ENCODE measurements at regions of chr1 and their contacts with region 1.

Region 1: DNA sequence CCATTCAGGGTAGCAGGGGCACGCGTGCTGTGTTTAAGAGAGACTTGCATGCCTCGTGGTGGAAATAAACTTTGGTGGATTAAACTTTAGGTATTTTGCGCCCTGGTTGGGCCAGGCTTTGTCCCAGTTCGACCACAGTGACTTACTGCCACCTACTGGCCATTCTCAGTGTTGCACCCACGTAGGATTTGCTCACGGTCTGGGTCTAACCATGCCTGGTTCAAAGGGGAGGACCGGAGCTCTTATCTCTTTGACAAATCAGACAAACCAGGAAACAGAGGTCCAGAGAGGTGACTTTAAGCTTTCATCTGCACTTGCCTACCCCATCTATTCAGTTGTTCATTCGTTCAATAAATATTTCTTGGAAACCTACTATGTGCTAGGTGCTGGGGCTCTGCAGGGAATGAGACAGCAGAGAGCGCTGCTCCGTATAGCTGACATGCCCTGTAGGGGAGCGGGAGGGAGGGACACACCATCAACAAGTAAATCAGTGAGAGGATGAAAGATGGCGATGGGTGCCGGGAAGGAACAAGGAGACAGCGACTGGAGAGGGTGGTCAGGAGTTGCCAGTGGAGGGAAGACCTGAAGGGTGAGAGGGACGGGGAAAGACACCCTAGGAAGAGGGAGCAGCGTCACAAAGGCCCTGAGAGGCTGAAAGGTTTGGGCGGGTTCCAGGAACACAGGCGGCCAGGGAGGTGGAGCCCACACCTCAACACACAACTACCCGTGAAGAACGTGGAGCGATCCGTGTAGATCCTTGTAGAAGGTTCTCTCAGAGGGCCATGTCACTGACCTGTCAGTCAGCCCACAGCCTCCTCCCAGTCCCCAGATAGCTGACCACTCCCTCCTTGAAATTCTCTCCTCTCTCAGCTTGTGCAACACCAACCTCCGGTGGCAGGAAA is 27.2 kb upstream of the TINAGL1 start:
- DNase-seq: peak; percentile 17
- H3K4me3 ChIP-seq: peak overlapping the region in 1 of 4 donors; percentile 53
- H3K27ac ChIP-seq: peak overlapping the region in 3 of 4 donors; percentile 18 to 42 (median 30)
- H3K4me1 ChIP-seq: peaks cover 0 to 20% (median 15%) of the 10 kb centered on the region in 3 donors
- H3K27me3 ChIP-seq: peaks cover 0 to 31% (median 0%) of the 10 kb centered on the region in 4 donors
- CTCF ChIP-seq: peak; percentile 90 to 97 (median 96)
- POLR2A ChIP-seq: no peak

Region 2: GRCh38 chr1:31182352-31182751 is 366.8 kb before region 1 on chr1:
- intact Hi-C with region 1: loop called (anchors 10 kb)
- DNase-seq: peak; percentile 10
- H3K4me3 ChIP-seq: peak overlapping the region in 3 of 4 donors; percentile 19 to 40 (median 32)
- H3K27ac ChIP-seq: peak overlapping the region in 3 of 4 donors; percentile 53 to 82 (median 75)
- H3K4me1 ChIP-seq: peaks cover 13 to 25% (median 13%) of the 10 kb centered on the region in 3 donors
- H3K27me3 ChIP-seq: peaks cover 0 to 72% (median 0%) of the 10 kb centered on the region in 4 donors
- CTCF ChIP-seq: peak in 3 of 6 experiments; percentile 24 to 71 (median 30)
- POLR2A ChIP-seq: no peak

Region 3: GRCh38 chr1:31394628-31395193 is 154.4 kb before region 1 on chr1:
- intact Hi-C with region 1: loop called (anchors 5 kb)
- DNase-seq: peak; percentile 52
- H3K4me3 ChIP-seq: peak overlapping the region in 3 of 4 donors; percentile 28 to 57 (median 37)
- H3K27ac ChIP-seq: peak overlapping the region in 2 of 4 donors; percentile 19 to 38
- H3K4me1 ChIP-seq: peaks cover 10 to 30% (median 11%) of the 10 kb centered on the region in 3 donors
- H3K27me3 ChIP-seq: no peaks in the 10 kb centered on the region
- CTCF ChIP-seq: peak; percentile 77 to 94 (median 86)
- POLR2A ChIP-seq: no peak

Region 4: GRCh38 chr1:31422505-31423319 is 126.4 kb before region 1 on chr1:
- intact Hi-C with region 1: loop called (anchors 10 kb)
- DNase-seq: no peak
- H3K4me3 ChIP-seq: no peak overlapping the region
- H3K27ac ChIP-seq: peak overlapping the region in 3 of 4 donors; percentile 46 to 70 (median 68)
- H3K4me1 ChIP-seq: peaks cover 6 to 43% (median 7%) of the 10 kb centered on the region in 3 donors
- H3K27me3 ChIP-seq: peaks cover 0 to 4% (median 0%) of the 10 kb centered on the region in 4 donors
- CTCF ChIP-seq: peak; percentile 91 to 95 (median 92)
- POLR2A ChIP-seq: no peak

Region 5: GRCh38 chr1:31626223-31627207 is 77.4 kb after region 1 on chr1:
- intact Hi-C with region 1: no loop called
- DNase-seq: no peak
- H3K4me3 ChIP-seq: no peak overlapping the region
- H3K27ac ChIP-seq: peak overlapping the region; percentile 58 to 71 (median 63)
- H3K4me1 ChIP-seq: peaks cover 6 to 29% (median 17%) of the 10 kb centered on the region in 3 donors
- H3K27me3 ChIP-seq: no peaks in the 10 kb centered on the region
- CTCF ChIP-seq: no peak
- POLR2A ChIP-seq: no peak